CD8-positive, alpha-beta T cell (primary cell): ENCODE measurements at regions of chr1 and their contacts with region 1.

Region 1: GRCh38 chr1:224513787-224514209 is 79.2 kb upstream of the WDR26 start:
- DNase-seq: peak; percentile 68 to 91 (median 81)
- ATAC-seq: peak; percentile 78
- H3K4me3 ChIP-seq: no peak overlapping the region
- H3K4me3 Mint-ChIP-seq: no peak overlapping the region
- H3K27ac ChIP-seq: no peak overlapping the region
- H3K27ac Mint-ChIP-seq: no peak overlapping the region
- H3K4me1 ChIP-seq: no peaks in the 10 kb centered on the region
- H3K4me1 Mint-ChIP-seq: peaks cover 6% of the 10 kb centered on the region
- H3K27me3 ChIP-seq: no peaks in the 10 kb centered on the region
- H3K27me3 Mint-ChIP-seq: no peaks in the 10 kb centered on the region
- CTCF ChIP-seq: peak; percentile 85

Region 2: DNA sequence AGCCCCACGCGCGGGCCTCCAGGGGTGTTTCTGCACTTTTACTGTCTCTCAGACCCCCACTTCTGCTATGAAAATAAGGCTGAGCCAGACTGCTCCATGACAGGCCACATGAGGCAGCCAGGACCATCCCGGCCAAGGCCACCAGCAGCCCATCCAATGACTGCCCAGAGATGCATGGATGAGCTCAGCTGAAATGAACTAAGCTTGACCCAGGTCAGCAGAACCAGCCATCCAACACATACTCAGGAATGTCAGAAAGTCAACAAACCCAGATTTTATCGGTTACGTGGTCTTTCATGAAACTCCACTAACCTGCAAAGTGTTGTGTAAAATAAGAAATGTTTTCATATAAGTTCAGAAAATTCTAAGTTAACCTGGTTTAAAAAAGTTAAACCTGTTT is 1069.4 kb before region 1 on chr1:
- CTCF ChIA-PET with region 1: no interaction called
- POLR2A ChIA-PET with region 1: no interaction called
- intact Hi-C with region 1: no loop called
- DNase-seq: no peak
- ATAC-seq: no peak
- H3K4me3 ChIP-seq: no peak overlapping the region
- H3K4me3 Mint-ChIP-seq: no peak overlapping the region
- H3K27ac ChIP-seq: no peak overlapping the region
- H3K27ac Mint-ChIP-seq: no peak overlapping the region
- H3K4me1 ChIP-seq: no peaks in the 10 kb centered on the region
- H3K4me1 Mint-ChIP-seq: no peaks in the 10 kb centered on the region
- H3K27me3 ChIP-seq: no peaks in the 10 kb centered on the region
- H3K27me3 Mint-ChIP-seq: peaks cover 28% of the 10 kb centered on the region
- CTCF ChIP-seq: no peak

Region 3: DNA sequence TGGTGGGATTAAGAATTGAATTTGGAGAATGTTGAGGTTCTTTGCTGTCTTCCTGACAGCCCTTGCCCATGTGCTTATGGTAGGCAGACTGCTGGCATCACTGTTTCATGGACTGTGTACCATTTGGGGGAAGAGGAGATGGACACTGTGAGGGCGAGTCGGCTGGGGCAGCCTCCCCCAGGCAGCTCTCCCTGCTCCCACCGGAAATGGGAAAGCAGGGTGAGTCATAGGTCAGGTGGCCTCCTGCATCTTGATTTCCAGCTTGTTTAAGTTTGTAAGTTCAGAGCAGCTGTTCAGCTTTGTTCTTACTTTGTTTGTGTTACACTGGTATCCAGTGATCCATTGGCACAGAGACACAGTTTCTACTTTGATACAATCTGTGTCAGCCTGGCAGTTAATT is 15.1 kb after region 1 on chr1:
- CTCF ChIA-PET with region 1: interaction called, 18 read pairs
- POLR2A ChIA-PET with region 1: no interaction called
- intact Hi-C with region 1: no loop called
- DNase-seq: no peak
- ATAC-seq: no peak
- H3K4me3 ChIP-seq: no peak overlapping the region
- H3K4me3 Mint-ChIP-seq: no peak overlapping the region
- H3K27ac ChIP-seq: no peak overlapping the region
- H3K27ac Mint-ChIP-seq: no peak overlapping the region
- H3K4me1 ChIP-seq: no peaks in the 10 kb centered on the region
- H3K4me1 Mint-ChIP-seq: no peaks in the 10 kb centered on the region
- H3K27me3 ChIP-seq: no peaks in the 10 kb centered on the region
- H3K27me3 Mint-ChIP-seq: peaks cover 3% of the 10 kb centered on the region
- CTCF ChIP-seq: no peak

Region 4: GRCh38 chr1:224851210-224851847 is 337.5 kb after region 1 on chr1:
- CTCF ChIA-PET with region 1: interaction called, 43 read pairs
- POLR2A ChIA-PET with region 1: no interaction called
- intact Hi-C with region 1: loop called in 1 of 2 experiments (anchors 1 kb)
- DNase-seq: peak; percentile 13 to 65 (median 47)
- ATAC-seq: no peak
- H3K4me3 ChIP-seq: no peak overlapping the region
- H3K4me3 Mint-ChIP-seq: no peak overlapping the region
- H3K27ac ChIP-seq: no peak overlapping the region
- H3K27ac Mint-ChIP-seq: no peak overlapping the region
- H3K4me1 ChIP-seq: no peaks in the 10 kb centered on the region
- H3K4me1 Mint-ChIP-seq: no peaks in the 10 kb centered on the region
- H3K27me3 ChIP-seq: peaks cover 0 to 2% of the 10 kb centered on the region in 2 experiments
- H3K27me3 Mint-ChIP-seq: peaks cover 2% of the 10 kb centered on the region
- CTCF ChIP-seq: peak; percentile 56

Region 5: GRCh38 chr1:224922404-224923164 is 408.8 kb after region 1 on chr1:
- CTCF ChIA-PET with region 1: interaction called, 55 read pairs
- POLR2A ChIA-PET with region 1: no interaction called
- intact Hi-C with region 1: loop called in 1 of 2 experiments (anchors 1 kb)
- DNase-seq: peak in 2 of 9 experiments; percentile 18 to 39
- ATAC-seq: no peak
- H3K4me3 ChIP-seq: no peak overlapping the region
- H3K4me3 Mint-ChIP-seq: no peak overlapping the region
- H3K27ac ChIP-seq: no peak overlapping the region
- H3K27ac Mint-ChIP-seq: no peak overlapping the region
- H3K4me1 ChIP-seq: no peaks in the 10 kb centered on the region
- H3K4me1 Mint-ChIP-seq: no peaks in the 10 kb centered on the region
- H3K27me3 ChIP-seq: no peaks in the 10 kb centered on the region
- H3K27me3 Mint-ChIP-seq: peaks cover 5% of the 10 kb centered on the region
- CTCF ChIP-seq: peak; percentile 62